Sigmoid colon (tissue), 7 donors: ENCODE measurements at regions of chrX and their contacts with region 1.

Region 1: GRCh38 chrX:48957827-48958634 is 624 bp upstream of the OTUD5 start:
- DNase-seq: peak; percentile 99
- H3K4me3 ChIP-seq: peak overlapping the region; percentile 45 to 71 (median 70)
- H3K27ac ChIP-seq: peak overlapping the region; percentile 89 to 90 (median 90)
- H3K4me1 ChIP-seq: peaks cover 0 to 43% (median 26%) of the 10 kb centered on the region in 4 donors
- H3K27me3 ChIP-seq: no peaks in the 10 kb centered on the region
- CTCF ChIP-seq: no peak
- EP300 ChIP-seq: no peak
- POLR2A ChIP-seq: peak; percentile 17 to 66

Region 2: GRCh38 chrX:48737213-48737938 is 220.7 kb before region 1 on chrX:
- intact Hi-C with region 1: no loop called
- DNase-seq: peak; percentile 97
- H3K4me3 ChIP-seq: peak overlapping the region; percentile 37 to 61 (median 56)
- H3K27ac ChIP-seq: peak overlapping the region; percentile 83 to 93 (median 86)
- H3K4me1 ChIP-seq: peaks cover 0 to 6% (median 2%) of the 10 kb centered on the region in 4 donors
- H3K27me3 ChIP-seq: no peaks in the 10 kb centered on the region
- CTCF ChIP-seq: no peak
- EP300 ChIP-seq: no peak
- POLR2A ChIP-seq: peak; percentile 57 to 66

Region 3: GRCh38 chrX:48761674-48762471 is 196.2 kb before region 1 on chrX and contains the start of gene GLOD5:
- intact Hi-C with region 1: no loop called
- DNase-seq: no peak
- H3K4me3 ChIP-seq: no peak within 1 kb of the TSS
- H3K27ac ChIP-seq: no peak within 1 kb of the TSS
- H3K4me1 ChIP-seq: no peaks in the 10 kb centered on the region
- H3K27me3 ChIP-seq: peaks cover 0 to 3% (median 0%) of the 10 kb centered on the region in 3 donors
- CTCF ChIP-seq: no peak
- EP300 ChIP-seq: no peak
- POLR2A ChIP-seq: no peak
- total RNA-seq, gene GLOD5: not detected

Region 4: GRCh38 chrX:48891402-48892288 is 66.4 kb before region 1 on chrX:
- intact Hi-C with region 1: loop called (anchors 5 kb)
- DNase-seq: peak; percentile 96
- H3K4me3 ChIP-seq: peak overlapping the region; percentile 63 to 67 (median 64)
- H3K27ac ChIP-seq: peak overlapping the region; percentile 80 to 85 (median 83)
- H3K4me1 ChIP-seq: peaks cover 0 to 19% (median 11%) of the 10 kb centered on the region in 4 donors
- H3K27me3 ChIP-seq: no peaks in the 10 kb centered on the region
- CTCF ChIP-seq: peak; percentile 15 to 45 (median 30)
- EP300 ChIP-seq: no peak
- POLR2A ChIP-seq: no peak